ENCODE measurements at regions of chr11 and their contacts with region 1.

Region 1: GRCh38 chr11:100575870-100576705 is 111.0 kb upstream of the ARHGAP42 start:
- DNase-seq: peak; percentile 73
- ATAC-seq: peak; percentile 51
- H3K4me3 ChIP-seq: no peak overlapping the region
- H3K4me3 Mint-ChIP-seq: no peak overlapping the region
- H3K27ac ChIP-seq: no peak overlapping the region
- H3K27ac Mint-ChIP-seq: no peak overlapping the region
- H3K4me1 ChIP-seq: peaks cover 0 to under 1% of the 10 kb centered on the region in 2 donors
- H3K4me1 Mint-ChIP-seq: peaks cover 2% of the 10 kb centered on the region
- H3K27me3 ChIP-seq: peaks cover 0 to 3% (median 0%) of the 10 kb centered on the region in 4 experiments
- H3K27me3 Mint-ChIP-seq: peaks cover 9% of the 10 kb centered on the region
- CTCF ChIP-seq: peak; percentile 96

Region 2: GRCh38 chr11:100670140-100670539 is 94.1 kb after region 1 on chr11:
- CTCF ChIA-PET with region 1: no interaction called
- POLR2A ChIA-PET with region 1: no interaction called
- intact Hi-C with region 1: no loop called
- DNase-seq: no peak
- ATAC-seq: no peak
- H3K4me3 ChIP-seq: no peak overlapping the region
- H3K4me3 Mint-ChIP-seq: no peak overlapping the region
- H3K27ac ChIP-seq: no peak overlapping the region
- H3K27ac Mint-ChIP-seq: no peak overlapping the region
- H3K4me1 ChIP-seq: no peaks in the 10 kb centered on the region
- H3K4me1 Mint-ChIP-seq: peaks cover 2% of the 10 kb centered on the region
- H3K27me3 ChIP-seq: no peaks in the 10 kb centered on the region
- H3K27me3 Mint-ChIP-seq: peaks cover 6% of the 10 kb centered on the region
- CTCF ChIP-seq: no peak

Region 3: GRCh38 chr11:100687630-100688395 is 111.7 kb after region 1 on chr11:
- CTCF ChIA-PET with region 1: interaction called, 27 read pairs
- POLR2A ChIA-PET with region 1: no interaction called
- intact Hi-C with region 1: loop called (anchors 1 kb)
- DNase-seq: peak; percentile 77
- ATAC-seq: peak; percentile 48
- H3K4me3 ChIP-seq: peak overlapping the region; percentile 65 to 82 (median 80)
- H3K4me3 Mint-ChIP-seq: peak overlapping the region; percentile 98
- H3K27ac ChIP-seq: peak overlapping the region in 1 of 2 donors; percentile 62
- H3K27ac Mint-ChIP-seq: peak overlapping the region; percentile 93
- H3K4me1 ChIP-seq: peaks cover 36 to 47% of the 10 kb centered on the region in 2 donors
- H3K4me1 Mint-ChIP-seq: peaks cover 53% of the 10 kb centered on the region
- H3K27me3 ChIP-seq: no peaks in the 10 kb centered on the region
- H3K27me3 Mint-ChIP-seq: no peaks in the 10 kb centered on the region
- CTCF ChIP-seq: peak; percentile 76

Region 4: DNA sequence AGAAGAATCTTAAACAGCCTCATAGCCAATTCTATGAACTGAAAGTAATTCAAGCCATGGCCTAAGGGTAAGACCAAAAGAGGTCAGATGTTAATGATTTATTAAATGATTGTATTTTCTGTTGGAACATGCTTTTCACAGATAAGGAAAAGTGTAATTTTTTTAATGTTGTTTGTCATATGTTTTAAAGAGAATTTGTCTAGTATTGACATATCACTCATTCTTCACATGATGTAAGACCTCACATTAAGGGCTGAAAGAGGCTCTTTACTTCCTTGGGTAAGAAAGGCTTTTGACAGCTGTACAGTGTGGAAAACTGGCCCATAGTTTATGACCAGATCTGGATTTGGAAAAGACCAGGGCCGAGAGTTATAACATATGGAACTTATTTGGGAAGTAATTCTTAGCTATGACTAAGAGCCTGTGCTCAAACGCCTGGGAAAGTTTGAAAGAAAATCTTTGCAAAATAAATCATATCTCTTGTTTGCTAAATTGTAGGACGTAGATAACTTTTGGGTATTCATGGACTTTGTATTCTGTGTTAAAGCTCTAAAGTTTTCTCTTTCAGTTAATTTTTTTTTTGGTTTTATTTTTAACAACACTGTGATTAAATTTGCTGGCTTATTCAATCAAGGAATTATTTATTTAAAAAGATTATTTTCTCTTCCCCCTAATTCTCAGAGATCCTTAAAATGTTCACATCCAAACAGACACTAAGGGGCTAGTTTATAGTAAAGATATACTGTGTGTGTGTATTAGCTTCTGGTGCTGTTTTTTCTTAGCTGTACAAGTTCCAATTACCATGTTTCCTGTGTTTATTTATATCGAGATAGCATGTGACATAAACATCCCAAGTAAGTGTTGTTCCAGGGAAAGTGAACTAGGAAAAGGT is 273.2 kb after region 1 on chr11:
- CTCF ChIA-PET with region 1: interaction called, 68 read pairs
- POLR2A ChIA-PET with region 1: no interaction called
- intact Hi-C with region 1: no loop called
- DNase-seq: no peak
- ATAC-seq: no peak
- H3K4me3 ChIP-seq: no peak overlapping the region
- H3K4me3 Mint-ChIP-seq: no peak overlapping the region
- H3K27ac ChIP-seq: no peak overlapping the region
- H3K27ac Mint-ChIP-seq: no peak overlapping the region
- H3K4me1 ChIP-seq: no peaks in the 10 kb centered on the region
- H3K4me1 Mint-ChIP-seq: no peaks in the 10 kb centered on the region
- H3K27me3 ChIP-seq: no peaks in the 10 kb centered on the region
- H3K27me3 Mint-ChIP-seq: no peaks in the 10 kb centered on the region
- CTCF ChIP-seq: no peak

Region 5: GRCh38 chr11:100930185-100930778 is 354.2 kb after region 1 on chr11:
- CTCF ChIA-PET with region 1: interaction called, 69 read pairs
- POLR2A ChIA-PET with region 1: no interaction called
- intact Hi-C with region 1: no loop called
- DNase-seq: peak; percentile 51
- ATAC-seq: no peak
- H3K4me3 ChIP-seq: no peak overlapping the region
- H3K4me3 Mint-ChIP-seq: no peak overlapping the region
- H3K27ac ChIP-seq: no peak overlapping the region
- H3K27ac Mint-ChIP-seq: no peak overlapping the region
- H3K4me1 ChIP-seq: peaks cover 2 to 7% of the 10 kb centered on the region in 2 donors
- H3K4me1 Mint-ChIP-seq: peaks cover 17% of the 10 kb centered on the region
- H3K27me3 ChIP-seq: no peaks in the 10 kb centered on the region
- H3K27me3 Mint-ChIP-seq: no peaks in the 10 kb centered on the region
- CTCF ChIP-seq: peak; percentile 87